SK-N-SH (cell line): ENCODE measurements at regions of chr14 and their contacts with region 1.

Region 1: GRCh38 chr14:65019944-65020566 is 33.4 kb downstream of the FNTB start:
- DNase-seq: peak; percentile 59
- H3K4me3 ChIP-seq: no peak overlapping the region
- H3K27ac ChIP-seq: no peak overlapping the region
- H3K4me1 ChIP-seq: no peaks in the 10 kb centered on the region
- H3K27me3 ChIP-seq: no peaks in the 10 kb centered on the region
- CTCF ChIP-seq: peak; percentile 73
- EP300 ChIP-seq: no peak
- RAD21 ChIP-seq: peak; percentile 57

Region 2: DNA sequence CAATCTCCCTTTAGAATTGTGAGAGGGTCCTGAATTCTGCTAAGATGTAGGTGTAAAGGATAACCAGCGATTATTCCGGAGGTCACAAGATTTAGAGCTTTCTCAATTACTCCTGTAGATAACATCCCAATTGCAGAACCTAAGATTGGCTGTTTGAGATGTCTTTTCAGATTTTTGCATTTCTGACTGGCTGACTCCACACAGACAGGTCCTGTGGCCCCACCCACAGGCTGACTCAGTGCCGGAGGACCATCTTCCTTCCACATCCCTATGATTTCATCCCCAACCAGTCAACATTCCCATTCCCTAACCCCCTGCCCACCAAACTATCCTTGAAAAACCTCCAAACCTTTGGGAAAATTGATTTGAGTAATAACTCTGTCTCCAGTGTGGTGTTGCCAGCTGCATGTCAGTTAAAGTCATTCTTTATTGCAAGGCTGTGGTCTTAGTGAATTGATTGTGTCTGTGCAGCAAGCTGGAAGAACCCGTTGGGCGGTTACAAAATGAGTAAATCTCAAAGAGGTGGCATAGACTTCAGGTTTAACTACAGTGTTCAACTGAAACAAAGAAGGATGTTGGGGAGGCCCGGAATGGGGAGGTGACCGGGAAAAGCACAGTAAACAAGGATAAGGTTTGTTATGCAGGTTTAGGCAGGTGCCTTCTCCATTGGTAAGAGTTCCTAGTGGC is 22.8 kb before region 1 on chr14:
- CTCF ChIA-PET with region 1: interaction called, 19 read pairs
- POLR2A ChIA-PET with region 1: no interaction called
- DNase-seq: no peak
- H3K4me3 ChIP-seq: no peak overlapping the region
- H3K27ac ChIP-seq: no peak overlapping the region
- H3K4me1 ChIP-seq: no peaks in the 10 kb centered on the region; a peak in 1 of 4 replicates
- H3K27me3 ChIP-seq: no peaks in the 10 kb centered on the region
- CTCF ChIP-seq: no peak
- EP300 ChIP-seq: no peak
- RAD21 ChIP-seq: no peak

Region 3: DNA sequence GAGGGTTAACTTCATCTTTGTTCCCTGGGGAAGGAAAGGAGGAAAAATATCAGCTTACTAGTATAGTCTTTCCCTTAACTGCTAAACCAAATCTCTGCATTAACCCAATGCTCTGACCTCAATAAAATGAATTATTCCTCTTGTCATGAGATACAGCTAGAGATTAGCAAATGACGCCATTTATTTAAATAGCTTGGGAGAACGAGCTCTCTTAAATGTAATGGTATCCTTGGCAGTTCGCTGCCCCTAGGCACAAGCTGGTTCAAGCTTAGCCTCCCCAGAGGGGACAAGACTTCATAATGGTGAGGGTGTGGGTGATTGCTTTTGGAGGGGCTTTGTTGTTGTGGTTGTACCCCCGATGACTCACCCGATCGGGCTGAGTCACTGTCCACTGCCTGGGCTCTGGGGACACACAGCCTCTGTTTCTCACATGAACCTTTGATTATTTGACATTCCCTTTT is 13.8 kb before region 1 on chr14:
- CTCF ChIA-PET with region 1: interaction called, 19 read pairs
- POLR2A ChIA-PET with region 1: no interaction called
- DNase-seq: no peak
- H3K4me3 ChIP-seq: no peak overlapping the region
- H3K27ac ChIP-seq: no peak overlapping the region
- H3K4me1 ChIP-seq: no peaks in the 10 kb centered on the region
- H3K27me3 ChIP-seq: no peaks in the 10 kb centered on the region
- CTCF ChIP-seq: no peak
- EP300 ChIP-seq: no peak
- RAD21 ChIP-seq: no peak

Region 4: GRCh38 chr14:65035049-65035448 is 15.0 kb after region 1 on chr14:
- CTCF ChIA-PET with region 1: interaction called, 30 read pairs
- POLR2A ChIA-PET with region 1: no interaction called
- DNase-seq: peak; percentile 22
- H3K4me3 ChIP-seq: no peak overlapping the region
- H3K27ac ChIP-seq: no peak overlapping the region
- H3K4me1 ChIP-seq: peaks cover 0 to 6% of the 10 kb centered on the region in 2 experiments; a peak in 1 of 4 replicates
- H3K27me3 ChIP-seq: no peaks in the 10 kb centered on the region
- CTCF ChIP-seq: no peak
- EP300 ChIP-seq: no peak
- RAD21 ChIP-seq: no peak